Endothelial cell of umbilical vein (primary cell): ENCODE measurements at regions of chr10 and their contacts with region 1.

Region 1: DNA sequence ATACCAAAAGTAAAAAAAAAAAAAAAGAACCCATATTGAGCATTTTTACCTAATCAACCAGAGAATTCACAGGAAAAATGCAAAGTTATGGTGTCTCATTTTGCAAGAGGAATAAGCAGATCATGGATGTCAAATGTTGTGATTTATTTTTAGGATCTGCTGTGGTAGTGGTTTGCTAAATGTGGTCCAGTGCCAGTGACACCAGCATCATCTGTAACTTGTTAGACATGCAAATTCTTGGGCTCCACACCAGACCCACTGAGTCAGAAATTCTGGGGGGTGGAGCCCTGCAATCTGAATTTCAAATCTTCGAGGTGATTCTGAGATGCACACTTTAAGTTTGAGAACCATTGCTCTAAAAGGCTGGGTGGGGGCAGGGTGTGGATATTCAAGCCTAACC is 30.1 kb upstream of the ZEB1 start:
- DNase-seq: no peak
- H3K4me3 ChIP-seq: no peak overlapping the region
- H3K27ac ChIP-seq: no peak overlapping the region
- H3K4me1 ChIP-seq: no peaks in the 10 kb centered on the region
- H3K27me3 ChIP-seq: no peaks in the 10 kb centered on the region
- CTCF ChIP-seq: no peak
- POLR2A ChIP-seq: no peak

Region 2: DNA sequence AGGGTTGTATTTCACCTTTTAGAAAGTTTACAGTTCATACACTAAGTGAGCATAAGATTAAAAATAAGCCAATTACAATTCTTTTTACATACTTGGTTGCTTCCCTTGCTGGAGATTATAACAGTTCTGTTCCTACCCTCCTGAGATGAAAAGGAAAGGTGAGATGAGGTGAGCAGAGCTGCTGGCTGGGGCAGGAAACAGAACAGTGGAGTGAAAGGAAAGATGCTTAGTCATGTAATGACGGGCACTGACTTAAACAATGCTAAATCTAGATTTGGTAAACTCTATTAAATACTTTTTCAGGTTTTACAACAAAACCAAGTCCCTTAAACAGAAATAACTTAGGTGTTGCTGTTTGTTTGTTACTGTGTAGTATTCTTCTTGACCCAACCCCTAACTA is 10.2 kb after region 1 on chr10:
- CTCF ChIA-PET with region 1: interaction called, 12 read pairs
- POLR2A ChIA-PET with region 1: no interaction called
- dilution Hi-C with region 1: no loop called
- intact Hi-C with region 1: no loop called
- DNase-seq: peak; percentile 47
- H3K4me3 ChIP-seq: no peak overlapping the region
- H3K27ac ChIP-seq: peak overlapping the region; percentile 12
- H3K4me1 ChIP-seq: peaks cover 7% of the 10 kb centered on the region
- H3K27me3 ChIP-seq: no peaks in the 10 kb centered on the region
- CTCF ChIP-seq: no peak
- POLR2A ChIP-seq: no peak

Region 3: DNA sequence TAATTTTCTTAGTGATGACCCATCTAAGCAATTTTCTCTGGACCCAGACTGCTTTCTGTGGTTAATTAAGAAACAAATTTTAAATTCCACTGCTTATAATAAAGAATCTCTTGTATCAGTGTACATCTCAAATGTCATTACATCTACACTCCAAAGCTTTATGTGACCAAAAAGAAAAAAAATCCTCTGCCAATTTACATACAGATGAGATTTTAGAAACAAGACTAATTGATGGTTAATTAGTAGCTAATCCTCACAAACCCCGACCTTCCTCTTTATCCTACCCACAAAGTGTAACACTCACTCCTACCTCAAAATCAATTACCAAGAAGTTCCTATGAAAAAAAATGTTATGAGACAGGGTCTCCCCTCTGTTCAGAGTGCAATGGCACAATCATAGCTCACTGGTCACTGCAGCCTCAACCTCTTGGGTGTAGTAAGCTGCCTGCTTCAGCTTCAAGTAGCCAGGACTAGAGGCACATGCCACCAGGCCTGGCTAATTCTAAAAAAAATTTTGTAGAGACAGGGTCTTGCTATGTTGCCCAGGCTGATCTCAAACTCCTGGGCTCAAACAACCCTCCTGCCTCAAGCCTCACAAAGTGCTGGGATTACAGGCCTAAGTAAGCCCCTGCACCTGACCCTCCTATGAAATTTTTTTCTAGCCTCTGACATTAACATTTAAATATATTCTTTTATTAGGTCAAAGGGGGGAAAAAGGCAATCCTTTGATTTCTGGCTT is 752.5 kb after region 1 on chr10:
- CTCF ChIA-PET with region 1: no interaction called
- POLR2A ChIA-PET with region 1: no interaction called
- dilution Hi-C with region 1: no loop called
- intact Hi-C with region 1: no loop called
- DNase-seq: no peak
- H3K4me3 ChIP-seq: no peak overlapping the region
- H3K27ac ChIP-seq: no peak overlapping the region
- H3K4me1 ChIP-seq: peaks cover 19% of the 10 kb centered on the region
- H3K27me3 ChIP-seq: no peaks in the 10 kb centered on the region
- CTCF ChIP-seq: no peak
- POLR2A ChIP-seq: no peak